HCT116 (cell line): ENCODE measurements at regions of chr18 and their contacts with region 1.

Region 1: GRCh38 chr18:23737578-23737977 is 48.3 kb downstream of the LAMA3 start:
- DNase-seq: no peak
- ATAC-seq: no peak
- H3K4me3 ChIP-seq: no peak overlapping the region
- H3K27ac ChIP-seq: no peak overlapping the region
- H3K4me1 ChIP-seq: peaks cover 0 to 6% of the 10 kb centered on the region in 2 experiments; a peak in 2 of 4 replicates
- H3K27me3 ChIP-seq: no peaks in the 10 kb centered on the region
- CTCF ChIP-seq: no peak
- POLR2A ChIP-seq: no peak
- RAD21 ChIP-seq: no peak

Region 2: GRCh38 chr18:23710946-23711345 is 26.6 kb before region 1 on chr18:
- CTCF ChIA-PET with region 1: no interaction called
- POLR2A ChIA-PET with region 1: no interaction called
- RAD21 ChIA-PET with region 1: no interaction called
- intact Hi-C with region 1: loop called (anchors 1 kb)
- DNase-seq: no peak
- ATAC-seq: no peak
- H3K4me3 ChIP-seq: no peak overlapping the region
- H3K27ac ChIP-seq: no peak overlapping the region
- H3K4me1 ChIP-seq: peaks cover 4 to 15% of the 10 kb centered on the region in 2 experiments
- H3K27me3 ChIP-seq: no peaks in the 10 kb centered on the region
- CTCF ChIP-seq: no peak
- POLR2A ChIP-seq: no peak
- RAD21 ChIP-seq: no peak